Left colon (tissue), 2 donors: ENCODE measurements at regions of chr9 and their contacts with region 1.

Region 1: DNA sequence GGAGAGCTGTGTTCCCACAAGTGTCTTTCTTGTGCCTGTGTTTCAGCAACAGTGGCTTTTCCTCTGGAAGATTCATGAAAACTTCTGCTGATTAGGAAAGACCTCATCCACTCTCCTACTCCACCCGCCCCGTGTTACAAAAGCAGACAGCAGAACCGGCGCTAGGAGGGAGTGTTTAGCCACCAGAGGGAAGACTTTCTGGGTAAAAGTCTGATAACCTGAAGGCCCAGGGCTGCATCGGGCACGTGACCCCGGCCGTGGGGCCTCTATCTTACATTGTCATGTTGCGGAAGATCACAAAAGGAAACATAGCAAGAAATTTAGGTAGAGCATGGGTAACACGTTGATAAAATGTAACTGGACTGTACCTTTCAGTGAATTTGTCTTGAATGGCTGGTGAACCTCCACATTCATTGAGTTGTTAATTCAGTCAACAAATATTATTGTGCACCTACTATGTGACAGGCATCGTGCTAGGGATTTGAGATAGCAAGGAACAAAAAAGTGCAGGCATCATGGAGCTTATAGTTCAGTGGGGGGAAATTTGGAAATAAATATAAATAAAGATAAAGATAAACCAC is 31.9 kb upstream of the DMRT2 start:
- DNase-seq: peak; percentile 41 to 57
- ATAC-seq: peak; percentile 89

Region 2: GRCh38 chr9:385818-386398 is 632.3 kb before region 1 on chr9:
- intact Hi-C with region 1: loop called in 1 of 2 experiments (anchors 10 kb)
- DNase-seq: peak in 1 of 2 donors; percentile 38
- ATAC-seq: peak; percentile 94

Region 3: DNA sequence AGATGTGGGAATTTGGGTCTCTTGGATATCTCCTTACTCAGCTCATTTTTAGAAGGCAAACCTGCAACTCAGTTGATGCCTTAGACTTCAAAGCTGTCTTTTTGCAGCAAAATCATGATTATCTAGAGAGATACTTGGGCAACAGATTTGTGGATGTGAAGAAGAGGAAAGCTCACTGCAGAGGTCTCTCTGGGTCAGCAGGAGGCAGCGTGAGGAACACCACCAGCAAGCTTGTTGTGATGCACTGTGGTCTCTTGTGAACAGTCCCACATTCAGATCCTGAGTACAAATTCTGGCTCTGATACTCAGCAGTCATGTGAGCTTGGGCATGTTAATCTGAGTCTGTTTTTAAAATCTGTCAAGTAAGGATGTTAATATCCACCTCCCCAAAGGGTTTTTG is 68.1 kb before region 1 on chr9:
- intact Hi-C with region 1: no loop called
- DNase-seq: no peak
- ATAC-seq: no peak

Region 4: GRCh38 chr9:1071730-1072129 is 53.5 kb after region 1 on chr9:
- intact Hi-C with region 1: no loop called
- DNase-seq: peak; percentile 78 to 87
- ATAC-seq: peak; percentile 98